Dendritic cell treated with granulocyte-macrophage colony-stimulating factor and Interleukin-4, amounts not matched to agents 40 ng/mL and 50 ng/mL, for 4 days (primary cell): ENCODE measurements at regions of chr9 and their contacts with region 1.

Region 1: DNA sequence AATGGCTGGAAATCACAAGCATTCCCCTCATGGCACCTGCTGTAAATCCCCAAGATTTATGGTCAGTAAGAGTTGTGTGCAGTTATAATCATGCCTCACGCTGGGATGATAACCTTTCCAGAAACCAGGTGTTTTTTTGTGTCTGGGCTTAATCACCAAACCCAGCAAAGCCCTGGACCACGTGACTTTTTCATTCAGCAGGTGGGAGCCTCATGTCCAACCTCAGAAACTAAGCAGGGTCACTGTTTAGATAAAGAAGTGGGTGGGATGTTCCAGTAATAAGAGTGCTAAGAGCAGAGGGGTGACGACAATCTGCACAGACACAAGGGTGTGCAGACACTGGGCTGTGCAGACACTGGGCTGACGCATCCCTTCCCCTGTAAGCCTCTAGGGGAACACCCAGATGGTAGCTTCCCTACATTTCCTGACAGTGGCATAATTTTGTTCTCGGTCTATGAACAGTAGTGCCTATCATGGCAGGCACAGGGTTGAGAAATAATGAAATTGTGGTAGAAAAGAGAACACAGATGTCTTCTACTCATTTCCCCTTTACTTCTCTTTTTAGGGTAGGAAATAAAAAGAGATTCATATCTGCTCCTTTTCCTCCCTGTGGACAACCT is 85.1 kb downstream of the SAXO1 start:
- H3K4me3 Mint-ChIP-seq: no peak overlapping the region
- H3K27ac Mint-ChIP-seq: no peak overlapping the region
- H3K4me1 Mint-ChIP-seq: peaks cover 9% of the 10 kb centered on the region
- H3K27me3 Mint-ChIP-seq: peaks cover 3% of the 10 kb centered on the region

Region 2: DNA sequence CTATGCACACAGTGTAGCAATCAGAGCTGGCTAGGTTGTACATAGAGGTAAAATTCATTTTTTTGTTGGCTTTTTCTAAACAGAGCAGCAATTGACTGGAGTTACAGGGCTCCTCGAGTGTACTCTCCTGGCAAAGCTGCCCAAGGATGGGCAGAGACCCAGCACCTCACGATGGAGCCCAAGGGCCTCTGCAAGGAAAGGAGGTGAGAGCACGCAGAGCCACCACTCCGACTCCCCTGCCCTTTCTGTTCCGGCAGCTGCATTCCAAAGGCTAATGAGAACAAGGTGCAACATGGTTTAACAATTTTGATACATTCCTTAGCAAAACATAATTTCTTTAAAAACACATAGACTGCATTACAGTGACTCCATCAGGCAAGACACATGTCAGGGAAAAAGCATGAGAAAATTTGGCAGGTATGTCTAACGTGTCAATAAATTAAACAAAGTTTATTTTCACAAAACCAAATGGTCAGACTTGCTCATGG is 37.6 kb after region 1 on chr9:
- intact Hi-C with region 1: no loop called
- H3K4me3 Mint-ChIP-seq: no peak overlapping the region
- H3K27ac Mint-ChIP-seq: no peak overlapping the region
- H3K4me1 Mint-ChIP-seq: no peaks in the 10 kb centered on the region
- H3K27me3 Mint-ChIP-seq: no peaks in the 10 kb centered on the region

Region 3: GRCh38 chr9:19018201-19018600 is 70.3 kb after region 1 on chr9:
- intact Hi-C with region 1: loop called (anchors 2 kb)
- H3K4me3 Mint-ChIP-seq: no peak overlapping the region
- H3K27ac Mint-ChIP-seq: no peak overlapping the region
- H3K4me1 Mint-ChIP-seq: peaks cover 5% of the 10 kb centered on the region
- H3K27me3 Mint-ChIP-seq: no peaks in the 10 kb centered on the region

Region 4: DNA sequence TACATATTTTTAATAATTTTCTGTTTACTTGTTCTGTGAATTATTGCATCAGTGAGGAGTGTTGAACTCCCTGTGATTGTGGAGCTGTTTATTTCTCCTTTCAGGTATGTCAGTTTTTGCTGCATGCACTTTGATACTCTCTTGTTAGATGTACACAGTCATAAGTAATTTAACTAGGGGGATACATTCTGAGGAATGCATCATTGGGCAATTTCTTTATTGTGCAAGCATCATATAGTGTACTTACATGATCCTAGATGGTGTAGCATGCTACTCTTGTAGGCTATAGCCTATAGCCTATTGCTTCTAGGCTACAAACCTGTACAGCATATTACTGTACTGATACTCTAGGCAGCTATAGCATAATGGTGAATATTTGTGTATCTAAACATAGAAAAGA is 292.1 kb after region 1 on chr9:
- intact Hi-C with region 1: no loop called
- H3K4me3 Mint-ChIP-seq: no peak overlapping the region
- H3K27ac Mint-ChIP-seq: no peak overlapping the region
- H3K4me1 Mint-ChIP-seq: peaks cover 47% of the 10 kb centered on the region
- H3K27me3 Mint-ChIP-seq: no peaks in the 10 kb centered on the region